HEK293 (cell line): ENCODE measurements at regions of chr2 and their contacts with region 1.

Region 1: DNA sequence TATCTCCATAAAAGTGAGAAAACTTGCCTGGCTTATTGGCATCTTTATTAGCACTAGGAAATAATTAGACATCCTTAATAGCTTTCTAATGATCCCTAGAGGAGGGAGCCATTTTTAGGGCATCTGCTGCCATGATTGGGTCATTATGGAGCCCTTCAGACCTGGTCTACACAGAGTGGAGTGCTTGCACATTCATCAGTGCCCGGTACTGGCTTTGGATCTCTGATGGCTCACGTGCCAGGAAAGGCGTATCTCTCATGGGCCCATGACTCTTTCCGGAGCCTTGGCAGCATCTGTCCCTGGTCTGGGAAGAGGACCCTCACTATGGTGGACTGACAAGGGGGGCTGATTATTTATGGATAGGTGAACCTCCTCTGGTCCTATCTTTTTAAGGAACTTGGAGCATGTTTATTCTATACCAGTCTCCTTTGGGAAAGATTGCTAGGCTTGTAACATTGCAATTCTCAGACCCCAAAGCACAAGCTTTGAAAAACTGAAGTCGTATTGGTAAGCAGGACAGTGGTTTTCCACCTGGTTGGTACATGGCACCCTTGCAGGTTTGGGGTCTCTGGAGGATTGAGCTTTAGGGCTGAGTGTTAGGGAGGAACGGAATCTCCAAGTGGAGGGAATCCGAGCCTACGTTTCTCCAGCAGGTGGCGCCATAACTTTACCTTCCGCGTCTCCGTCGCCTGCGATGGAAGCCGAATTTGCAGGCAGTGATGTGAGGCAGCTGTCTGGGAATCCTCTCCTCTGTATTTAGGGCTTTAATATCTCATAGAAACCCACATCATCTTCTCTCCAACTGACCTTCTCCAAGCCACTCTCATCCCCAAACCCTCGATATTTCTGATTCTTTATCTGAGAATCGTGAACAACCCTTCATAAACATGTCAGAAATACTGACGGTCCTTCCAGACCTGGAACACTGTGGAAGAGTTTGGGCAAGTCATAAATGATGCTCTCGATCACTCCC is 27.8 kb downstream of the SIX2 start:
- H3K4me3 ChIP-seq: no peak overlapping the region
- H3K27ac ChIP-seq: no peak overlapping the region
- H3K4me1 ChIP-seq: no peaks in the 10 kb centered on the region
- CTCF ChIP-seq: peak; percentile 84

Region 2: GRCh38 chr2:44949329-44950151 is 31.9 kb before region 1 on chr2:
- CTCF ChIA-PET with region 1: no interaction called
- POLR2A ChIA-PET with region 1: no interaction called
- H3K4me3 ChIP-seq: no peak overlapping the region; the same call in 1 of the 2 replicates
- H3K27ac ChIP-seq: no peak overlapping the region
- H3K4me1 ChIP-seq: no peaks in the 10 kb centered on the region; the same call in 1 of the 2 replicates
- CTCF ChIP-seq: no peak

Region 3: DNA sequence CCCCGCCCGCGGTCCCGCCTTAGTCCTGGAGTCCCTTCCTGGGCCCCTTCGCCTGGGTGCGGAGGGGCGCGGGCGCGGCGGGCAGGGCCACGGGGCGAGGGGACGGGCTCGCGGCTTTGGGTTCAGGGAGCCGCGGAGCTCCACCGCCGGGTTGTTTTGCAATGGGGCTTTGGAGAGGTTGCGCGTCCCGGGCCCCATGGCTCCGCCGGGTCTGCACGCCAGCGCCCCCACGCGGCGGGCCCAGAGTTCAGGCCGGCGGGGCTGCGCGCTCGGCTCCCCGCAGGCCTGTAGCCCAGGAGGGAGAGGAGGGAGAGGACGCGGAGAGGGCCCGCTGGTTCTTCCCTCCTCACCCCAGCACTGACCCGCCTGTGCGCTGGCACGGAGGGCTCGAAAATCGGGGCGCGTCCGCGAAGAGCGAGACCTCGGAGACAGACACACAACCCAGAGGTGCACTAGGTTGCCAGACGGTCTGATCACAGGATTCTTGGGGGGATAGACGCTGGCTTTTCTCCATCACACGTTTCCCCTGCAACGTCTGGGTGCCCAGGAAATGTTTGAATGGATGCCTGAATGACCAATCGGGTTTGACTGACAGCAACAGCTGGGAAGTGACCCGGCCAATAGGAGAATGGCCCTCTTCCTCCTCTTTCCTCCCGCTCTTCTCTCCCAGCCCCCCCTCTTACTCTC is 32.7 kb after region 1 on chr2:
- CTCF ChIA-PET with region 1: interaction called, 14 read pairs
- POLR2A ChIA-PET with region 1: interaction called, 4 read pairs
- H3K4me3 ChIP-seq: peak overlapping the region; percentile 31
- H3K27ac ChIP-seq: peak overlapping the region; percentile 52; the same call in 1 of the 2 replicates
- H3K4me1 ChIP-seq: peaks cover 2% of the 10 kb centered on the region; the same call in 1 of the 2 replicates
- CTCF ChIP-seq: no peak

Region 4: DNA sequence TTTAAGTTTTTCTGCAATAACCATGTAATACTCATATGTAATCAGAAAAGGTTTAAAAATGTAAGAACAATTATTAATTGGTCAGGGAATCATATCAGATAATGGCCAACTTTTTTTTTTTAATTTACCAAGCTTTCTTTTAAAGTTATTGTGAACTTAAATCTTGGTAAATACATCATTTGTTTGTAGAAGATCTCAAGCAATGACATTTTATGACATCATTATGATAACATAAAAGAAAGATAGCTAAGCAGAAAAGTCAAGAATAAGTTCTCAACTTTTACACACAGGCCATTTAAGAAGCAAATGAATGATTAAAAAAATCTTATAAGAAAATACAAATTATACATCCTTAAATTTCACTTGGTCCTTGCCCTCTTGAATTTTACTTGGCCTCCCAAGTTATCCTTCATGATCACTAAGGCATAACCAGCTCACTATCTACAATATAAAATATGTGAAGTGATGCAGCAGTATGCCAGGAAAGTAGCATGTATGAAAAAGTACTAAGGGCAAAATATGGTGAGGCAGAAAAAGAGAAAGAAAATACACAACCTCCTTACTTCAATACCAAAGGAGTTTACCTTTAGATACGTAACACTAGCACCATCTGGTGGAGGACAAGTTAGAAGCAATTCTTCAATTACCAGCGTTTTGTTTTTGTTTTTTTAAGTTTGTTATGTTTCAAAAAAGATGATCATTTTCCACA is 513.0 kb after region 1 on chr2:
- CTCF ChIA-PET with region 1: interaction called, 106 read pairs
- POLR2A ChIA-PET with region 1: no interaction called
- H3K4me3 ChIP-seq: no peak overlapping the region
- H3K27ac ChIP-seq: no peak overlapping the region
- H3K4me1 ChIP-seq: 0 out of 2 replicates have a peak, but pooled peaks cover 5% of the 10 kb centered on the region
- CTCF ChIP-seq: 0 out of 2 replicates have a peak, but pooled peaks have one; percentile 55